IMR-90 (cell line): ENCODE measurements at regions of chr2 and their contacts with region 1.

Region 1: GRCh38 chr2:172921532-172922236 is 154.0 kb upstream of the MAP3K20 start:
- DNase-seq: peak; percentile 78
- ATAC-seq: peak; percentile 89
- H3K4me3 ChIP-seq: no peak overlapping the region
- H3K27ac ChIP-seq: no peak overlapping the region
- H3K4me1 ChIP-seq: peaks cover 6% of the 10 kb centered on the region; the same call in 1 of the 2 replicates
- H3K27me3 ChIP-seq: no peaks in the 10 kb centered on the region
- CTCF ChIP-seq: no peak
- POLR2A ChIP-seq: no peak
- RAD21 ChIP-seq: no peak

Region 2: GRCh38 chr2:172884336-172884735 is 37.3 kb before region 1 on chr2:
- CTCF ChIA-PET with region 1: no interaction called
- POLR2A ChIA-PET with region 1: no interaction called
- dilution Hi-C with region 1: no loop called
- in situ Hi-C with region 1: no loop called
- intact Hi-C with region 1: loop called (anchors 5 kb)
- DNase-seq: peak; percentile 53
- ATAC-seq: no peak
- H3K4me3 ChIP-seq: no peak overlapping the region
- H3K27ac ChIP-seq: no peak overlapping the region
- H3K4me1 ChIP-seq: no peaks in the 10 kb centered on the region
- H3K27me3 ChIP-seq: no peaks in the 10 kb centered on the region; the same call in 1 of the 2 replicates
- CTCF ChIP-seq: no peak
- POLR2A ChIP-seq: no peak
- RAD21 ChIP-seq: no peak

Region 3: GRCh38 chr2:172938713-172939375 is 17.2 kb after region 1 on chr2:
- CTCF ChIA-PET with region 1: no interaction called
- POLR2A ChIA-PET with region 1: no interaction called
- dilution Hi-C with region 1: no loop called
- in situ Hi-C with region 1: no loop called
- intact Hi-C with region 1: no loop called
- DNase-seq: peak; percentile 31
- ATAC-seq: no peak
- H3K4me3 ChIP-seq: no peak overlapping the region
- H3K27ac ChIP-seq: no peak overlapping the region
- H3K4me1 ChIP-seq: no peaks in the 10 kb centered on the region
- H3K27me3 ChIP-seq: no peaks in the 10 kb centered on the region
- CTCF ChIP-seq: no peak
- POLR2A ChIP-seq: no peak
- RAD21 ChIP-seq: no peak